BJ (cell line): ENCODE measurements at regions of chr14 and their contacts with region 1.

Region 1: GRCh38 chr14:50773632-50774541 is 57.1 kb downstream of the NIN start:
- DNase-seq: no peak
- H3K4me3 ChIP-seq: no peak overlapping the region
- H3K27me3 ChIP-seq: no peaks in the 10 kb centered on the region
- CTCF ChIP-seq: peak; percentile 94

Region 2: GRCh38 chr14:50594577-50595316 is 179.1 kb before region 1 on chr14:
- CTCF ChIA-PET with region 1: interaction called, 78 read pairs
- POLR2A ChIA-PET with region 1: interaction called, 18 read pairs
- DNase-seq: no peak
- H3K4me3 ChIP-seq: no peak overlapping the region
- H3K27me3 ChIP-seq: no peaks in the 10 kb centered on the region
- CTCF ChIP-seq: no peak

Region 3: GRCh38 chr14:50619556-50620141 is 154.2 kb before region 1 on chr14:
- CTCF ChIA-PET with region 1: interaction called, 70 read pairs
- POLR2A ChIA-PET with region 1: no interaction called
- DNase-seq: no peak
- H3K4me3 ChIP-seq: no peak overlapping the region
- H3K27me3 ChIP-seq: no peaks in the 10 kb centered on the region
- CTCF ChIP-seq: peak; percentile 78

Region 4: GRCh38 chr14:50762001-50762930 is 11.6 kb before region 1 on chr14:
- CTCF ChIA-PET with region 1: interaction called, 49 read pairs
- POLR2A ChIA-PET with region 1: no interaction called
- DNase-seq: peak; percentile 51
- H3K4me3 ChIP-seq: no peak overlapping the region
- H3K27me3 ChIP-seq: no peaks in the 10 kb centered on the region
- CTCF ChIP-seq: no peak

Region 5: DNA sequence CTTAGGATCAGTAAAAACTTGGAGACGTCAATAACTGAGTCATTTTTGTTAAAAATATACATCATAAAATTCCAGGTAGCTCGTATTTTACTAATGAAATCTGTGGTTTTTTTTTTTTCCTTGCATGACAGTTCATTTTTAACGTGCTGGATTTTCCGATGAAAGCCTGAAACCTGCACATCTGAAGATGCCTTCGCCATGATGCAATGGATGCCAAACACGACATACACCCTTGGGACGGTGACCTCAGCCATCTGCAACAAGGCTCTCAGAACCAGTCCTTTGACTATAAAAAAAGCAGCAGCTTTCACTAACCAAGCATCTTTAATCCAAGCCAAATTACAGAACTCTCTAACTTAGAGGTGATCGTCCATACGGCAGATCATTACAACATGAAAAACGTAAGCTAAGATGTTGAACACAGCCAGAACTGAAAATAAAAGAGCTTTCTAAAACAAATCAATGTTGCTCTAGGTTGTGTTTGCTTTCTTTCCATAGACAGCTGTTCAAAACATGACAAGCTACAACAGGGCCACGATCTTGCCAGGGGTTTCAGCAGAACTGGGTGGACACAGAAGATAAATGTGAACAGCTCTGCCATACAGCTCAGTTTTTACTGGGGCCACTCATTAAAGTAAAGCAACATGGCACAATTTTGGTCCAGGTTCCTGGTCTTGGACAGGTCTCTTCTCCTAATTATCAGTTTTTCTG is 49.3 kb after region 1 on chr14:
- CTCF ChIA-PET with region 1: no interaction called
- POLR2A ChIA-PET with region 1: no interaction called
- DNase-seq: no peak
- H3K4me3 ChIP-seq: no peak overlapping the region
- H3K27me3 ChIP-seq: no peaks in the 10 kb centered on the region
- CTCF ChIP-seq: no peak

Region 6: DNA sequence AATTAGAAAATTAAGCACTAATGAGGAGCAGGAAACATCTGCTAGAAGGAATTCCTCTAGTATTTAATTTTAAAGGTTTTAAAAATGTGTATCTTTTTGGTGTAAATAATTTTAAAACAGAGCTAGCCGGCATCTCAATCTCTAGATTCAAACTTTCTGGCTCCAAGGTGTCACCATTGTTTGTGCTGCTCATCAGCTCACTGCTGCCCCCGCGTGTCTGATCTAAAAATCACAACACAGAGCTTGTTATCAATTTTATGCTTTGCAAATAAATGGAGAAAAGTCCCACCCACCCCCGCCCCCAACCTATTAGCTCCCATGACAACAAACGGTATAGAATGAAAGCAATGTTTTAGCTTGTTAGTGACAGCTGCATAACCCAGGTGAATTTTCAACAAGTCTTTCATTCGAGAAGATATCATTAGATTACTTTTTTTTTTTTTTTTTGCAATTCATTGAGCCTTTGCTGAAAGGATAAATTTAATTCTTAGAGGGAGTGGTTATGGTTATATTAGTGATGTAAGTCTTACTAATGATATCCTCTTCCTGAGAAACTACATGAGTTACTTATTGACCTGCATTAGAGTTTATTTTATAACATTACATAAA is 86.7 kb after region 1 on chr14:
- CTCF ChIA-PET with region 1: interaction called, 56 read pairs
- POLR2A ChIA-PET with region 1: no interaction called
- DNase-seq: peak; percentile 25
- H3K4me3 ChIP-seq: peak overlapping the region; percentile 41
- H3K27me3 ChIP-seq: no peaks in the 10 kb centered on the region
- CTCF ChIP-seq: peak; percentile 75